ENCODE measurements at regions of chr5 and their contacts with region 1.

Region 1: DNA sequence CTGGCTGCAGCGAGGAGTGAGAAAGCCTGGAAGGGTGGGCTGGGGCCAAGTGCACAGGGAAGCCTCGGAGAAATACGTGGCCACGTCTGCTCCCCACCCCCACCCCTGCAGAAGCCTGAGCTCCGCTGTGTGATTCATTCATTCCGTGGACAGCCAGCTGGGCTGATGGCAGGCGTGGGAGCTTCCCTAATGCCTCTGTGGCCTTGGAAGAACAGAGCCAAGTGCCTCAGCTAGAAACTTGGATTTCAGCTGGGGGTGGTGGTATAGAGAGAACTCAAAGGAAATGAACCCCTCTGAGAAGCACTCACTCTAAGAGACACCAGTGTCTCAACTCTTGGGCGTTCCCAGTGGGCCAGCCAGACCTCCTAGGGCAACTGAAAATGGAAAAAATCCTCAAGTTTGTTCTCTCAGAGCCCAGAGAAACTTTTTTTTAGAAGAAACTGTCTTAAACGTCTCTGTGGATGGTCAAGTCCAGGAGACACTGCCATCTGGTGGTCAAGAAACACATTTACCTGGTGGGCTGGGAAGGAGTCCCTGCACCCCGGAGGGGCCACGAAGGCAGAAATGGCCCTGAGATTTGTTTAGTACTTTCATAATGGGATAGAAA is 18.0 kb downstream of the ATOX1 start:
- DNase-seq: no peak
- ATAC-seq: peak; percentile 77
- H3K4me3 ChIP-seq: no peak overlapping the region
- H3K27ac ChIP-seq: peak overlapping the region; percentile 25
- H3K4me1 ChIP-seq: peaks cover 18% of the 10 kb centered on the region
- H3K27me3 ChIP-seq: no peaks in the 10 kb centered on the region
- CTCF ChIP-seq: peak; percentile 94

Region 2: GRCh38 chr5:151596828-151597539 is 143.5 kb before region 1 on chr5:
- intact Hi-C with region 1: no loop called
- DNase-seq: no peak
- ATAC-seq: peak; percentile 67
- H3K4me3 ChIP-seq: no peak overlapping the region
- H3K27ac ChIP-seq: no peak overlapping the region
- H3K4me1 ChIP-seq: no peaks in the 10 kb centered on the region
- H3K27me3 ChIP-seq: no peaks in the 10 kb centered on the region
- CTCF ChIP-seq: no peak

Region 3: DNA sequence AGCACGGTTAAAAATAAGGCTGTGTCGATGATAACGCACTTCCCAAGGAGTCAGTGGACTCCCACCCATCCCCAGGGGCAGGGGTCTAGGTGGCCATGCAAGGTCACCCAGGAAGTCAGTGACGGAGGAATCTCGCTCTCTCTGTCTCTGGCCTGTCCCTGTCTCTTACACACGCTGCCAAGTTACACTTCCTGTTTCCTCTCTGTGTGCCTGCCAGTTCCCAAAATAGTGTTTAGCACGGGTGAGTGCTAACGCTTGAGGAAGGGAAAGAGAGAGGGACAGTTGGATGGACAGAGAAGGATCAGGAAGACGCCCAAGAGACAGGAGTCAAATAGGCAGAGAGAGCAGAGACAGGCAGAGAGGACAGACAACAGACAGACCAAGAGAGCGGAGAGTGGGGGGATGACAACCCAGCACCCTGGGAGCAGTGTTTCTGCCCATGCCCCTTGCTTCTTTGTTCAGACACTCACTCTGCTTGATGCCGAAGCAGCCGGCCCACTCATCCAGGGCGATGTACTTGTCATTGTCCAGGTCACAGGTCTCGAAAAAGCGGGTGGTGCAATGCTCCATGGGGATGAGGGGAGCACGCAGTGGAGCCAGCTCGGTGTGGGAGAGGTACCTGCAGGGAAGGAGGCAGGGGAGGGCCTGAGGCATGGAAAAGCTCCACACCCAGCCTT is 76.7 kb before region 1 on chr5:
- intact Hi-C with region 1: loop called (anchors 5 kb)
- DNase-seq: no peak
- ATAC-seq: peak; percentile 77
- H3K4me3 ChIP-seq: no peak overlapping the region
- H3K27ac ChIP-seq: peak overlapping the region; percentile 79
- H3K4me1 ChIP-seq: peaks cover 60% of the 10 kb centered on the region
- H3K27me3 ChIP-seq: no peaks in the 10 kb centered on the region
- CTCF ChIP-seq: no peak